ENCODE measurements at regions of chr12 and their contacts with region 1.

Region 1: GRCh38 chr12:104410786-104411185 is 46.0 kb upstream of the CHST11 start:
- DNase-seq: no peak
- ATAC-seq: no peak
- H3K4me3 ChIP-seq: no peak overlapping the region
- H3K4me3 Mint-ChIP-seq: no peak overlapping the region
- H3K27ac ChIP-seq: no peak overlapping the region
- H3K27ac Mint-ChIP-seq: no peak overlapping the region
- H3K4me1 ChIP-seq: no peaks in the 10 kb centered on the region
- H3K4me1 Mint-ChIP-seq: no peaks in the 10 kb centered on the region
- H3K27me3 ChIP-seq: no peaks in the 10 kb centered on the region
- H3K27me3 Mint-ChIP-seq: no peaks in the 10 kb centered on the region
- CTCF ChIP-seq: no peak

Region 2: DNA sequence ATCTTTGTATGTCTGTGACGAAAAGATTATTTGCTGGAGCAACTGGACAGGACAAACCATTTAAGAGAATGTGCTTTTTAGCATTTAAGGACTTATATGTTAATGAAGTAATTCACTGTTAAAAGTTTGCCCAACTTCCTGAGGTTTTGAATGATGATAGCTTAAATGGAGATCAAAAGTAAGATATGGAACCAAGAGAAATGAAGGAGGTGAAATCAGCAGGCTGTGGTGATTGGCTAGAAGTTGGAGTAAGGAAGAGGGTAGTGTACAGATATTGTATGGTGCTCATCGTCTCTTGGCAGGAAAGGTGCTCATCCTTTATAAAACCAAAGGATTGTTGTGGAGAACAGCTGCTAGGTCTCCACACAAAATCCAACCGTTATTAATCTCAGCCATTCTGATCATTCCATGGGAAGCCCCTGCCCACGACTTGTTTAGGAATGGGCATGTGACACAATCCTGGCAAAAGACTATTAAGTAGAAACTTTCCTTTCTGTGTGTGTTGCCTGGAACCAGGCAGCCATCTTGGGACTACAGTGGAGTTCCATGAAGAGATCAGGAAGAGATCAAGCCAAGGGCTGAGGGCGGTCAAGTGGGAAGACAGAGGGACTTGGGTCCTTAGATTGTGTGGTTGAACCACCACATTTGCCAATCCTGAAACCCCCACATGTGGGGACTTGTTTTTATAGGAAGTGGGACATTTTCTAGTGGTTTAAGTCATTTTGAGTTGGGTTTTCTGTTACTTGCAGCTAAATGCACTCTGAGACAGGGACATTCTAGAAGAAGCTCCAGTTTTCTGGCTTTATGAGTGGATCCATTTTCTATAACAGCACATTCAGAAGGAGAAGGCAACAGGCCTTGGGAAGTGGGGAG is 10.8 kb before region 1 on chr12:
- CTCF ChIA-PET with region 1: no interaction called
- POLR2A ChIA-PET with region 1: no interaction called
- intact Hi-C with region 1: loop called in 1 of 2 experiments (anchors 1 kb)
- DNase-seq: no peak
- ATAC-seq: no peak
- H3K4me3 ChIP-seq: no peak overlapping the region
- H3K4me3 Mint-ChIP-seq: no peak overlapping the region
- H3K27ac ChIP-seq: no peak overlapping the region
- H3K27ac Mint-ChIP-seq: no peak overlapping the region
- H3K4me1 ChIP-seq: no peaks in the 10 kb centered on the region
- H3K4me1 Mint-ChIP-seq: no peaks in the 10 kb centered on the region
- H3K27me3 ChIP-seq: no peaks in the 10 kb centered on the region
- H3K27me3 Mint-ChIP-seq: no peaks in the 10 kb centered on the region
- CTCF ChIP-seq: no peak

Measured in CD4-positive, alpha-beta T cell (primary cell).